ENCODE measurements at regions of chr1 and their contacts with region 1.

Region 1: DNA sequence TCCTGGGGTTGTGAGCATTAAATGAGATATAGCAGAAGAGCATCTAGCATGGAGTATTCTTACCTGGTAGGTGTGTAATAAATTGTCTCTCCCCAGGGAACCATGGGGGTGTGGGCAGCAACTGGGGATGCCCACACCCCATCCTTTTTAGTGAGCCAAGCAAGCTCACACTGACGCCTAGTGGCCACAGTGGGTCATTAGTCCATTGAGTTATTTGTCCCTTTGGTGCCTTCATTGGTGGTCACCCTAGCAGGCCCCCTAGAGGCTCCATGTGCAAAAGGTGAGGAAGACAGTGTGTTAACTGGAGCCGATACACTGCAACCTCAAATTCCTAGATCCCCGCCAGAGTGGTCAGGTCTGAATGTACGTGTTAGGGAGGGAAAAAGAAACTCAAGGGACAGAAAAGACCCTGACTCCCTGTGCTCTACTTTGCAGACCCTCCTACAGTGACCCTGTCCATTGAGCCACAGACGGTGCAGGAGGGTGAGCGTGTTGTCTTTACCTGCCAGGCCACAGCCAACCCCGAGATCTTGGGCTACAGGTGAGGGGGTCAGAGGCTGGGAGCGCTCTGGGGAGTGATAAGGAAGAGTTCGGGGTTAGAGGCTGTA is 93.3 kb upstream of the CD1D start:
- DNase-seq: peak; percentile 69
- H3K4me3 ChIP-seq: no peak overlapping the region
- H3K27ac ChIP-seq: no peak overlapping the region
- H3K4me1 ChIP-seq: no peaks in the 10 kb centered on the region
- CTCF ChIP-seq: peak; percentile 93

Region 2: DNA sequence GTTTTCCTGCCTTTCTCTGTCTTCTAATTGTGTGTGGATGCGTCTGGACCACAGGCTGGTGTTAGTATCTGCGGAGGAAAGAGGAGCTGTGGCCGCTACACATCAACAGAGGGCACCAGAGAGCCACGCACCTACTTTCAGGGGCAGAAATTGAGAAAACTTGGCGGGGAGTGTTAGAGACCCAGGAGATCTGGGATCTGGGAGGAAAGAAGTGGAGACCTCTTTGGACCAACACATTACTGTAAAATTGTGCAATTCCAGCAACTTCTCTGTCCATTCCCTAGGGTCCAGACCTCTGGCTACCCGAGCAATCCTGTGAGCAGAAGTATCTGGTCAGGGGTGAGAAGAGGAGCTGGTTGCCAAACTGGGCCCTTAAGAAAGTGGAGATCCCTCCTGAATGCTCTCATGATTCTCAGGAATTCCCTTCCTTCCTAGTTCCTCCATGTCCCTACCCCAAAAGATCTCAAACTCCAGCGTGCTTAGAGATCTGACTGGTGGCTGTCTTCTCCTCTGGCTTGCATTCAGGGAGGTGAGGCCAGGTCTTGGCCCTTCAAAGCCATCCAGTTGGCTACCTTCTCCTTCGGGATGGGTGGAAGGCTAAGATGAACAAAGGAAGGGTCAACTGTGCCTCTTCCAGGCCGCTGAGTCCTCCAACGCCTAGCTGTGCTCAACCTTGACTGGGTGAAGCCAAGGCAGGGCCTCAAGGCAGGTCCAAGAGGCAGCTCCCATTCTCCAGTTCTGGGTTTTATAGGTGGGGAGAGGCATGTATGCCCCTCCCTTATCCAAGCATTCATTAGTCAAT is 95.2 kb before region 1 on chr1:
- CTCF ChIA-PET with region 1: no interaction called
- POLR2A ChIA-PET with region 1: no interaction called
- intact Hi-C with region 1: loop called (anchors 1 kb)
- DNase-seq: peak; percentile 53
- H3K4me3 ChIP-seq: no peak overlapping the region
- H3K27ac ChIP-seq: no peak overlapping the region
- H3K4me1 ChIP-seq: no peaks in the 10 kb centered on the region
- CTCF ChIP-seq: peak; percentile 95

Region 3: DNA sequence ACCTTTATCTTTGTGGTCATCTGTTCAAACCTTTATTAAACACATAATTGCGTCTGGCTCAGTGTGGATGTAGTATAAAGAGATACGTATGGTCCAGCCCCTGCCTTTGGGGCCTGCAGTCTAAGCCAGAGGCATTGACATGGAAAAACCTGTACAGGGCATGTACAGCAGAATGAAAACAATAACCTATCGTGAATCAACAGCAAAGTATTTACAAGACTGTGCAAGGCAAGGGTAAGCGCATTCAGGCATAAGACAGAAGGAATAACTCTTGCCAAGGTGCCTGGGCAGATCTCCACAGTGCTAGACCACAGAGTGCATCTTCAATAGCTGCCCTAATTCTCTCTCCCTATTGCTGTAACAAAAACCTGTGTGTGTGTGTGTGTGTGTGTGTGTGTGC is 58.5 kb before region 1 on chr1:
- CTCF ChIA-PET with region 1: no interaction called
- POLR2A ChIA-PET with region 1: no interaction called
- intact Hi-C with region 1: no loop called
- DNase-seq: no peak
- H3K4me3 ChIP-seq: no peak overlapping the region
- H3K27ac ChIP-seq: no peak overlapping the region
- H3K4me1 ChIP-seq: no peaks in the 10 kb centered on the region
- CTCF ChIP-seq: no peak

Measured in OCI-LY7 (cell line).